Colonic mucosa (tissue), 4 donors: ENCODE measurements at regions of chr12 and their contacts with region 1.

Region 1: GRCh38 chr12:57846577-57847319 is at the start of gene CTDSP2:
- DNase-seq: peak; percentile 100
- H3K4me3 ChIP-seq: peak within 1 kb of the TSS; percentile 93
- H3K27ac ChIP-seq: peak within 1 kb of the TSS; percentile 96
- H3K4me1 ChIP-seq: peaks cover 16% of the 10 kb centered on the region
- H3K27me3 ChIP-seq: no peaks in the 10 kb centered on the region
- CTCF ChIP-seq: no peak
- total RNA-seq, gene CTDSP2: 131 to 200 TPM

Region 2: GRCh38 chr12:57520053-57520871 is 326.5 kb before region 1 on chr12 and contains the start of gene DDIT3:
- intact Hi-C with region 1: loop called (anchors 5 kb)
- DNase-seq: peak; percentile 100
- H3K4me3 ChIP-seq: peak within 1 kb of the TSS; percentile 83
- H3K27ac ChIP-seq: peak within 1 kb of the TSS; percentile 98
- H3K4me1 ChIP-seq: peaks cover 33% of the 10 kb centered on the region
- H3K27me3 ChIP-seq: no peaks in the 10 kb centered on the region
- CTCF ChIP-seq: no peak
- total RNA-seq, gene DDIT3: 17.5 to 22.8 TPM

Region 3: GRCh38 chr12:57810450-57810849 is 36.3 kb before region 1 on chr12:
- intact Hi-C with region 1: no loop called
- DNase-seq: no peak
- H3K4me3 ChIP-seq: no peak overlapping the region
- H3K27ac ChIP-seq: no peak overlapping the region
- H3K4me1 ChIP-seq: no peaks in the 10 kb centered on the region
- H3K27me3 ChIP-seq: no peaks in the 10 kb centered on the region
- CTCF ChIP-seq: no peak